B cell (primary cell): ENCODE measurements at regions of chr11 and their contacts with region 1.

Region 1: DNA sequence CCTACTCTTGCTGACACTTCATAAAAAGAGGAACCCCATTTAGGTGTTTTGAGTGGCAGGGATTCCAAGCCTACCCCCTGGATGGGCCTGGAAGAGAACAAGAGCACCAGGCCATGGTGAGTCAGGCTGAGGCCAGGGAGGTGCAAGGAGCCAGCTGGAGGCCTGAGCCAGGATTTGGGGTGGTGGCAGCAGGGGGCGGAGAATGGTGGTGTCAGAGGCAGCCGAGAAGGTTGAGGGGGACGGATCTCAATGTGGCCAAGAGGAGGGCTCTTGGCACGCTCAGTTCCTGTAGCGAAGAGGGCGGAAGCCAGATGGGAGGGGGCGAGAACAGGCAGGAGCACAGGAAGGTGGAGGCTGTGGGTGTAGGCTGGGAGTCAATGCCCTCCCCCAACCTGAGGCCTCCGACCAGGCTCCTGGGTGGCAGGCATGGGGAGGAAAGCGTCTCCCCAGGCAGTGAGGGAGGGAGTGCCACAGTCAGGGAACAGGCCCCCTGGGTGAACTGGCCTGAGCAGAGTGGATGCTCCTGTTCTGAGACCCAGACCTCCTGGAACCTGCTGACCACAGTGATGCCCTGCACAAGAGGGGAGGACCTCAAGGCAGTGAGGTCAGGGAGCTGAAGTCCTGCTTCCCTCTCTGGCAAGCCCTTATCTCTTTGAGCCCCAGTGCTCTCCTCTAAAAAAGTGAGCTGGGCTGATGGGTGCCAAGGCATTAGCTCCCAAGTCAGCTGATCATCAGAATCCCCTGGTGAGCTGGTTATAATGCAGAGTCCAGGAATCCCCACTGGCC is 13.9 kb downstream of the RTN4RL2 start:
- DNase-seq: no peak
- ATAC-seq: no peak
- H3K4me3 ChIP-seq: no peak overlapping the region
- H3K4me3 Mint-ChIP-seq: peak overlapping the region; percentile 4
- H3K27ac ChIP-seq: no peak overlapping the region
- H3K27ac Mint-ChIP-seq: no peak overlapping the region
- H3K4me1 ChIP-seq: peaks cover 30 to 31% of the 10 kb centered on the region in 2 donors
- H3K4me1 Mint-ChIP-seq: peaks cover 25% of the 10 kb centered on the region
- H3K27me3 ChIP-seq: peaks cover 0 to 31% (median 3%) of the 10 kb centered on the region in 4 experiments
- H3K27me3 Mint-ChIP-seq: peaks cover 5% of the 10 kb centered on the region
- CTCF ChIP-seq: no peak

Region 2: GRCh38 chr11:57432714-57433163 is 41.5 kb before region 1 on chr11:
- CTCF ChIA-PET with region 1: no interaction called
- POLR2A ChIA-PET with region 1: interaction called, 10 read pairs
- intact Hi-C with region 1: no loop called
- DNase-seq: no peak
- ATAC-seq: no peak
- H3K4me3 ChIP-seq: no peak overlapping the region
- H3K4me3 Mint-ChIP-seq: no peak overlapping the region
- H3K27ac ChIP-seq: no peak overlapping the region
- H3K27ac Mint-ChIP-seq: no peak overlapping the region
- H3K4me1 ChIP-seq: no peaks in the 10 kb centered on the region
- H3K4me1 Mint-ChIP-seq: no peaks in the 10 kb centered on the region
- H3K27me3 ChIP-seq: no peaks in the 10 kb centered on the region
- H3K27me3 Mint-ChIP-seq: peaks cover 6% of the 10 kb centered on the region
- CTCF ChIP-seq: no peak